ENCODE measurements at regions of chr19 and their contacts with region 1.

Region 1: DNA sequence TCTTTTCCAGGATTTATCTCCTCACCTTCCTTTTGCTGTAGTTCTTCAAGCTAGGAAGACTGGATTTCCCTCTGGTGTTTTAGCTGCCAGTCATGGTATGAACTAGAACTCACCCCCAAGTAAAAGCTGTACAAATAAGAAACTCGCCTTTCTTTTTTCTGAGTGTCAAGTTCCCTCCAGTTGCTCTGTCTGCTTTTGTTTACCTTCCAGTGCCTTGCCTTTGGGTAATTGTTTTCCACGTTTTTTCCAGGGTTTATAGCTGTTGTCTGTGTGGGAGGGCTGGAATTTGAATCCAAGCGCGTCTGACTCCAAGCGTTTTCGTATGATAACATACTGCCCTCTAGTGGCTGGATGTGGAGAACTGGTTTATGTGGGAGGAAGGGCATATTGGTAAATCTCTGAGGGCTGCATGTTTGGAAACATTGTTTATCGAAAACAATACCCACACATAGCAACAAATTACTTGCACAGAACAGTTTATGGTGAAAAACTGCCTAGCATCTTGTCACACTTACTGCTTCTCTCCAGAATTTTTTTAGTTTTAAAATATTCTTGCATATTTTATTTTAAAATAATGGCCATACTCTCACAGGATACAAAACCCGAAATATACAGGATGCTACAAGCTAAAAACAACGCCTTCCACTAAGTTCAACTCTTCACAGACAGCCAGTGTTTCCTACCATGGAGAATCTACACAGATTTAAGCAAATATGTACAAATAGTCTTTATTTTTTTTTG is 19.2 kb downstream of the RCN3 start:
- DNase-seq: peak in 1 of 2 donors; percentile 89
- ATAC-seq: peak; percentile 56 to 91 (median 83)
- H3K4me3 ChIP-seq: no peak overlapping the region
- H3K27ac ChIP-seq: no peak overlapping the region
- H3K4me1 ChIP-seq: peaks cover 0 to 16% (median 0%) of the 10 kb centered on the region in 9 donors
- H3K27me3 ChIP-seq: no peaks in the 10 kb centered on the region
- CTCF ChIP-seq: peak; percentile 52 to 91 (median 85)

Region 2: DNA sequence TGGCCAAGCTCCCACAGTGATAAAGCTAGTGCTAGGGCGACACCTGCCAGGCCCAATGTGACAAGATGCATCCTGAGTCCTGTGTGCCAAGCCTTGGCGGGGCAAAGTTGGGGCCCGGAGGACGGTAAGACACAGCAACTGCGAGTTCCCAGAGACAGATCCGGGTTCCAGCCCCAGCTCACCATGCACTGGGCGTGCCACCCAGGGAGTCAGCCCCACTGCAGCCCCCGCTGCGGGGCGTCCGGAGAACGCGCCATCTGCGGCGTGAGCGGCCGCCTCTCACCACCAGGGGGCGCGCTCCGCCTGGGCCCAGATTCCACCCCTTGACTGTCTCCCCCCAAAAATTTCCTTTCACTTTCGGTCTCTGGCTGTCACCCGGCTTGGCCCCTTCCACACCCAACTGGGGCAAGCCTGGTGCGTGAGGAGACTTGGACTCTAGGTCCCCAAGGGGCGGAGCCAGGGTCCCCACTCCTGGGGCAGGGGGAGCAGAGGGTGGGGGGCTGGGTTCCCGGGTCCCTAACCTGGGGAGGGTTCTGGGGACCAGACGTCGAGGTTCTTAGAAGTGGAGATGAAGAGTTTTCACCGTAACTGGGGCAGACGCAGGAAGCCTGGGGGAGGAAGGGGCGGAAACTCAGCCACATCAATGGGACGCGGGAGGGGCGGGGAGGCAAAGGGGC is 73.0 kb before region 1 on chr19 and contains the start of gene FLT3LG:
- intact Hi-C with region 1: loop called in 2 of 10 experiments (anchors 1 to 2 kb)
- DNase-seq: peak; percentile 82 to 84
- ATAC-seq: peak; percentile 68 to 82 (median 76)
- H3K4me3 ChIP-seq: peak within 1 kb of the TSS; percentile 41 to 79 (median 68)
- H3K27ac ChIP-seq: peak within 1 kb of the TSS; percentile 66 to 93 (median 92)
- H3K4me1 ChIP-seq: peaks cover 4 to 42% (median 26%) of the 10 kb centered on the region in 9 donors
- H3K27me3 ChIP-seq: no peaks in the 10 kb centered on the region
- CTCF ChIP-seq: peak; percentile 98 to 100 (median 98)
- total RNA-seq, gene FLT3LG: 1.6 to 14.8 (median 3.1) TPM

Region 3: DNA sequence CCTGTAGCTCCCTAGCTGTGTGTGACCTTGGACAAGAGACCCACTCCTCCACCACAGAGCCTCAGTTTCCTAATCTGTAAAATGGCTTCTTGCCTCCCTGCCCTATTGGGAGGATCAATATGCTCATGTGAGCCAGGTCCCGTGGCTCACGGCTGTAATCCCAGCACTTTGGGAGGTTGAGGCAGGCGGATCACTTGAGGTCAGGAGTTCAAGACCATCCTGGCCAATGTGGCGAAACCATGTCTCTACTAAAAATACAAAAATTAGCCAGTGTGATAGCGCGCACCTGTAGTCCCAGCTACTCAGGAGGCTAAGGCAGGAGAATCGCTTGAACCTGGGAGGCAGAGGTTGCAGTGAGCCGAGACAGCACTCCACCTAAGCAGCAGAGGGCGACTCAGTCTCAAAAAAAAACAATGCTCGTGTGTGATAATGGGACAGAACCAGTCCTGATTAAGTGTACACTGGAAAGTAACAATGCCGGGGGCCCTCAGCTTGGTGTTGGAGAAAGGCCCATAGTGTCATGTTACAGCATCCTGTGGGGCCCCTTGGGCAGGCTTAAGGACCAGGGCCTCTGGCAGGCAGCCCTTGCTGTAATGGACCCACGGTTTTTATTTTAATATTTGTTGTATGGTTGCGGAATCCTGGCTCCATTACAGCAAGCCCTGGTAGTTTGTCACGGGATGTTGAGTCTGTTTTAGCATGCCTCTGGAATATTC is 44.0 kb before region 1 on chr19:
- intact Hi-C with region 1: loop called in 9 of 10 experiments (anchors 1 to 5 kb)
- DNase-seq: peak in 1 of 2 donors; percentile 59
- ATAC-seq: peak; percentile 16 to 64 (median 54)
- H3K4me3 ChIP-seq: no peak overlapping the region
- H3K27ac ChIP-seq: peak overlapping the region in 3 of 10 donors; percentile 17 to 46 (median 25)
- H3K4me1 ChIP-seq: peaks cover 6 to 54% (median 35%) of the 10 kb centered on the region in 9 donors
- H3K27me3 ChIP-seq: no peaks in the 10 kb centered on the region
- CTCF ChIP-seq: peak; percentile 34 to 78 (median 67)

Measured in heart right ventricle (tissue), 16 donors.